CD4-positive, alpha-beta T cell (primary cell): ENCODE measurements at regions of chr1 and their contacts with region 1.

Region 1: DNA sequence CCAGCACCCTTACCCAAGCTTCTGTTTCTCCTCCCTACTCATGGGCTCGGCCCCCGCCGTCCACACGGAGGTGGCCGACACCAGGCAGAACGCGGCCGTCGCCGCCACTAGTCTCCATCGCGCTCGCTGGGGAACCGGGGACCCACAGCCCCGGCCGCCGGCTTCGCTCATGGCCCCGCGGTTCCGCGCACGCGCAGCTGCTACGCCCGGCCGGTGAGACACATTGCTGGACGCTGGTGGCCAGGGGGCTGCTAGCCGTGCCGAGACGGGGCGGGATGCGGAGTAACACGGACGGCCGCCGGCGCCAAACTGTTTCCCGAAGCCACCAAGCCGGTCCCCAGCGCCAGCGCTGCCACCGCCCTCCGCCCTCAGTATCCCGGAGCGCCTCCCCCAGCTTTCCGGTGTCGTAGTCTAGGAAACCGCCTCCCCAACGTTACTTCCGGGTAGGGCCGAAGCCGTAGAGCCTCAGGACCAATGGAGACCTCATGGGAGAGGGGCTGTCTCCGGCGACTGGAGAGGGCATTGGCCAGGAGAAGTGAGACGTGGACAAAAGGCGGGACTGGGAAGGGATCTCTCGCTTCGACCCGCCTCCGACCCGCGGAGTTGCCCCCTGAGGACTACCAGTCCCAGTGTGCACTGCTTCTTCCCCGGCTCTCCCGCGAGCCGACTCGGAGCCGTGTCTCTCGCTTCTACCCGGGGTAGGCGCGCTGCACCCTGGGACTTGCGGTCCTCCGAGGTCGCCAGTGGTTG is at the start of gene EDEM3:
- DNase-seq: peak; percentile 93 to 100 (median 96)
- ATAC-seq: peak; percentile 91
- H3K4me3 ChIP-seq: peak within 1 kb of the TSS; percentile 96
- H3K4me3 Mint-ChIP-seq: peak within 1 kb of the TSS; percentile 92
- H3K27ac ChIP-seq: peak within 1 kb of the TSS; percentile 90 to 95
- H3K27ac Mint-ChIP-seq: peak within 1 kb of the TSS; percentile 87
- H3K4me1 ChIP-seq: peaks cover 8% of the 10 kb centered on the region
- H3K4me1 Mint-ChIP-seq: peaks cover 52% of the 10 kb centered on the region
- H3K27me3 ChIP-seq: no peaks in the 10 kb centered on the region
- H3K27me3 Mint-ChIP-seq: no peaks in the 10 kb centered on the region
- CTCF ChIP-seq: no peak
- total RNA-seq, gene EDEM3: 19.9 to 20.0 TPM

Region 2: DNA sequence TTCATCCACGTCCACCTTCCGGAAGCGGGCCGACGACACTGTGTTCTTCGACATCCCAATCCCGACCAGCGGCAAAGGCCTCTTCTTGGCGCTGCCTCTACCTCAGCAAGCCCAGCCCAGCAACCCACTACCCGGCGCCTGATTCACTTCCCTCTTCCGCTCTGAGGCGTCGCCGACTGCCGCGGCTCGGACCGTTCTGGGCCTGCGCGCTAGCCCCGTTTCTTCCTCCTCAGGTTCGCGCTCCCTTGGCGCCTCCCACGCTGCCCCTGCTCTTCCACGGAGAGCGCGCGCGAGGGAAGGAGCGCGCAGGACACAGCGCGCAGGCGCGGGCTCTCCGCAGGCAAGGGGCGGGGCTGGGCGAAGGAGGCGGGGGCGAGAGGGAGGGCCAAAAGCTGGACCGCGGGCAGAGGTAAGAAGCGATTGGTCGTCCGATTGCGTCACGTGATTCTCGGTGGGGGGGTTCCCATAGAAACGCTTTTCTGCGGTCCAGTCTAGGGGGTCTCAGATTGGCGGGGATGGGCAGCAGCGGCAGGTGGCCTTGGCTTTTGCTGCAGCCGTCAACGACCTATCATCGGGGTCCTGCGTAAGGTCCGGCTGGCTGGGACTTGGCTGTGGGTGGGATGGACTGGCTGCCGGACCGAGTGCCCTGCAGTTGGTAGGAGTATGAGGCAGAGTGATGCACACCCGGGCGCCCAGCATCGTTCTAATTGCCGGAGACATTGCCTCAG is 1118.9 kb before region 1 on chr1 and contains the start of gene ARPC5:
- CTCF ChIA-PET with region 1: no interaction called
- POLR2A ChIA-PET with region 1: no interaction called
- intact Hi-C with region 1: loop called (anchors 5 to 10 kb)
- DNase-seq: peak; percentile 91 to 99 (median 94)
- ATAC-seq: peak; percentile 88
- H3K4me3 ChIP-seq: peak within 1 kb of the TSS; percentile 93
- H3K4me3 Mint-ChIP-seq: peak within 1 kb of the TSS; percentile 100
- H3K27ac ChIP-seq: peak within 1 kb of the TSS; percentile 61 to 86
- H3K27ac Mint-ChIP-seq: peak within 1 kb of the TSS; percentile 94
- H3K4me1 ChIP-seq: peaks cover 17% of the 10 kb centered on the region
- H3K4me1 Mint-ChIP-seq: peaks cover 51% of the 10 kb centered on the region
- H3K27me3 ChIP-seq: no peaks in the 10 kb centered on the region
- H3K27me3 Mint-ChIP-seq: no peaks in the 10 kb centered on the region
- CTCF ChIP-seq: no peak
- total RNA-seq, gene ARPC5: 21.4 to 23.0 TPM

Region 3: DNA sequence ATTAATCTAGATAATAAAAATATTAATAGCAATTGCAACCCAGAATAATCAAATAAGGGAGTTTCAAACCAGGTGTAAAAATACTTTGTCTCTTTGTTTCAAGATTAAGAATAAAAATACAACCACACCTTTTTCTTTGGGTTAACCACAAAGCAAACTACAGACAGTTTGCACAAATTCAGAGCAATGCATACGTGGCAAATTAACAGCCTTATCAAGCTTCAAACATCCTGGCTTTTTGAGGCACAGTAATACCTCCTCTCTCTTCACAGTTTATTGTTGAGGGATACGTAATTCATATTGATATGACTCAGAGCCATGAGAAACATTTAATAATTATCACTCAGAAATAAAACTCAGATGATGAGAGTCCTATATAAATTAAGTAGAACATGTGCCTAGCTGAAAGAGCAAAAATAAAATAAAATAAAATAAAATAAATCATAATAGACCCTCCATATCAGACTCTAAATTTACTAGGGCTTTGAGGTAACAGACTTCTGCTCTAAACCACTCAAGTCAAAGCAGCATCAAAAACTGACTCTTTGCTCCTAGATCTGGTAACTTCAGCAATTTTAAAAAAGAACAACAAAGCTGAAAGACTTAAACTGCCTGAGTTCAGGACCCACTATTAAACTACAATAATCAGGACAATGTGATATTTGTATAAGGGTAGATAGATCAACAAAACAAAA is 11.4 kb before region 1 on chr1:
- CTCF ChIA-PET with region 1: interaction called, 16 read pairs
- POLR2A ChIA-PET with region 1: interaction called, 60 read pairs
- intact Hi-C with region 1: loop called in 1 of 2 experiments (anchors 1 kb)
- DNase-seq: peak in 5 of 14 experiments; percentile 29 to 87 (median 80)
- ATAC-seq: peak; percentile 92
- H3K4me3 ChIP-seq: no peak overlapping the region
- H3K4me3 Mint-ChIP-seq: peak overlapping the region; percentile 49
- H3K27ac ChIP-seq: peak overlapping the region; percentile 55 to 65
- H3K27ac Mint-ChIP-seq: peak overlapping the region; percentile 90
- H3K4me1 ChIP-seq: peaks cover 10% of the 10 kb centered on the region
- H3K4me1 Mint-ChIP-seq: peaks cover 79% of the 10 kb centered on the region
- H3K27me3 ChIP-seq: no peaks in the 10 kb centered on the region
- H3K27me3 Mint-ChIP-seq: no peaks in the 10 kb centered on the region
- CTCF ChIP-seq: no peak

Region 4: DNA sequence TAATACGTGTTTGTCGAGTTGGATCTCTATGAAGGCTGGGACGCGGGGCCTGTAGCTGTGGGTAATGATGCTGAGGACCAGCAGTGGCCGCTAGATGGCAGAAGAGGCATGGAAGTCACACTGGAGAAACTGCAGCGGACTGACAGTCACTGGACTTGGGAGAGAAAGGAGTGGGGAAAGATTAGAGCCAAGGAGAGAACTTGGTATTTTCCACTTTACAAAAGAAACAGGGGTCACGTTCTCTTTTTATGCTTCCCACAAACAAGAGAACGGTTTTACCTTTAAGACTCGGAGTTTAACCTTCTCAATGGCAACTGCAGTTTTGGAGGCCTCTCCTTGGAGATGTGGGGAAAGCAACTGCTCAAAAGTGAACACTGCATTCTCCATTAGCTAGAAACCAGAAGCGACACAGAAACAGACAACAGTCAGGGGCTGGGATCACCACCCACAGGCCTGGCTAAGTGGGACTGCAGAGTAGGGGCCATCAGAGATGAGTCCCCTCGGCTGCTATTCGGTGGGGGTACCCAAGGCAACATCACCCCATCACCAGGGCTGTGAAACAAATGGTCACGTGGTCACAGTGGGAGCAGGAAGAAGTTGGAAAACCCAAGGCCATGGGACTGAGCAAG is 51.1 kb after region 1 on chr1:
- CTCF ChIA-PET with region 1: no interaction called
- POLR2A ChIA-PET with region 1: no interaction called
- intact Hi-C with region 1: no loop called
- DNase-seq: peak; percentile 69 to 91 (median 79)
- ATAC-seq: peak; percentile 96
- H3K4me3 ChIP-seq: no peak overlapping the region
- H3K4me3 Mint-ChIP-seq: no peak overlapping the region
- H3K27ac ChIP-seq: no peak overlapping the region
- H3K27ac Mint-ChIP-seq: no peak overlapping the region
- H3K4me1 ChIP-seq: peaks cover 3% of the 10 kb centered on the region
- H3K4me1 Mint-ChIP-seq: no peaks in the 10 kb centered on the region
- H3K27me3 ChIP-seq: no peaks in the 10 kb centered on the region
- H3K27me3 Mint-ChIP-seq: no peaks in the 10 kb centered on the region
- CTCF ChIP-seq: peak; percentile 96

Region 5: DNA sequence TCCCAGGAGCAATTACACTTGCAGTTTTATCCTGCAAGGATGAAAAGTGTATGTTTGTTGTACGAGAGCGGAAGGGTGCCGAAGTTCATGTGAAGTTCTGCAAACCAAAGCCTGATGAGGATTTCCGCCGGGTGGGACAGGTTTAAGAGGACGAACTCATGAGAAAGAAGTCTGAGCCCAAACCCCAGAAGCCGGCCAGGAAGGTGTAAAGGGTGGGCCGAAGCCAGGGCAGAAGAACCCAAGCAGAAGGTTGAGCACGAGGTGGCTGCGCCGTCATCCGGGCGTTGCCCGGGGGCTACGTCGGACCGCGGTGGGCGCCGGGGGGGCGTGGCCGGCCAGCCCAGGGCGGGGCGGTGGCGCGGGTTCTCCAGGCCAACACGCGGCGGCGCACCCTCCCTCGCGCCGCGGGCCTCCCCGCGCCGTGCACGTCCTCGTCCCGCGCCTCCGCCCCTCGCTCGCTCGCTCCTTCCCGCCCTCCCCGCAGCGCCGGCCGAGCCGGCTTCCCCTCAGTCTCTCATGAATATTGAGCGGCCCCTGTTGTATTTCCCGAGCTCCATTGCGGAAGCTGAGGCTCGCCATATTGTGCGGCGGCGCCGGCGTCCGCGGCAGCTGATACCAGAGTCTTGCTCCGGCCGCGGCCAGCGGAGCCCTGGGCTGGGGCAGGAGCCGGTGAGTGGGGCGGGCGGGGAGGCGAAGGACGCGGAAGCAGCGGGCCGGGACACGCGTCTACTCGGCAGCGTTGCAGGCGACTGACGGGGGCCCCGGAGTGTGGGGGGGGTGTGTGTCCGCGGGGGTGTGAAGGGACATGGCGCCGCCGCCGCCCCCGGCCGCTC is 290.5 kb after region 1 on chr1 and contains the start of gene RNF2:
- CTCF ChIA-PET with region 1: no interaction called
- POLR2A ChIA-PET with region 1: interaction called, 10 read pairs
- intact Hi-C with region 1: loop called (anchors 5 kb)
- DNase-seq: peak; percentile 62 to 94 (median 76)
- ATAC-seq: peak; percentile 90
- H3K4me3 ChIP-seq: peak within 1 kb of the TSS; percentile 80
- H3K4me3 Mint-ChIP-seq: peak within 1 kb of the TSS; percentile 94
- H3K27ac ChIP-seq: peak within 1 kb of the TSS; percentile 70 to 72
- H3K27ac Mint-ChIP-seq: peak within 1 kb of the TSS; percentile 77
- H3K4me1 ChIP-seq: peaks cover 13% of the 10 kb centered on the region
- H3K4me1 Mint-ChIP-seq: peaks cover 59% of the 10 kb centered on the region
- H3K27me3 ChIP-seq: no peaks in the 10 kb centered on the region
- H3K27me3 Mint-ChIP-seq: no peaks in the 10 kb centered on the region
- CTCF ChIP-seq: peak; percentile 15
- total RNA-seq, gene RNF2: 7.4 to 9.0 TPM

Region 6: DNA sequence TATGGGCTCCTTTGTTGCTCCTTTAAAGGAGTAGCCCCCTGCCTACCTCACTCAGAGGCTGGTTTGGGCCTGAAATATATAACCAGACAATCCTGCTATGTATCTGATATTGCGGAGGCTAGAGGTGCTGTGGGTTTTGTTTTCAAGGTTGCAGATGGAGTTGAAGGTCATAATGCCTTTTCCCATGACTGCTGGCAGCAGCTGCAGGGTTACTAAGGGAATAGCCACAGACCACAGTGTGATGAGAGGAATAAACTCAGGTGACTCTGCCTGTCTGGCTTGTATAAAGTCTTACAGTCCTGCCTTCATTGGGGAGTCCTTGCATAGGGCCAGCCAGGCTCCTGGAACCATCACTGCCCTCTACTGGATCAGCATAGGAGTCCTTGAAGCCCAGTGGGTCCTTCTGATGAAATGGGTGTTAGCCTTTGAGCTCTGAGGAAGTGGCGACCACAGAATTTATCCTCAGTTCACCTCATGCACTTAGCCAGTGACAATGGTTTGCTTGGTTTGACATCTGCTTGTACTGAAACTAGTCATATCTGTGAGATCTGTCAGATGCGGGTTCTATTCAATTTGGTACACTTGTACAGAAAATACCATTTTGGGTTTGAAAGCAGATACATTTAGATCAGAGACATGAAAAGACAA is 805.2 kb after region 1 on chr1:
- CTCF ChIA-PET with region 1: no interaction called
- POLR2A ChIA-PET with region 1: no interaction called
- intact Hi-C with region 1: loop called in 1 of 2 experiments (anchors 10 kb)
- DNase-seq: peak in 10 of 14 experiments; percentile 17 to 84 (median 41)
- ATAC-seq: peak; percentile 69
- H3K4me3 ChIP-seq: no peak overlapping the region
- H3K4me3 Mint-ChIP-seq: peak overlapping the region; percentile 63
- H3K27ac ChIP-seq: peak overlapping the region in 1 of 2 donors; percentile 12
- H3K27ac Mint-ChIP-seq: peak overlapping the region; percentile 63
- H3K4me1 ChIP-seq: peaks cover 33% of the 10 kb centered on the region
- H3K4me1 Mint-ChIP-seq: peaks cover 54% of the 10 kb centered on the region
- H3K27me3 ChIP-seq: no peaks in the 10 kb centered on the region
- H3K27me3 Mint-ChIP-seq: no peaks in the 10 kb centered on the region
- CTCF ChIP-seq: no peak

Region 7: GRCh38 chr1:186375088-186375953 is 1620.7 kb after region 1 on chr1 and contains the starts of genes ODR4 and TPR:
- CTCF ChIA-PET with region 1: interaction called, 4 read pairs
- POLR2A ChIA-PET with region 1: interaction called, 8 read pairs
- intact Hi-C with region 1: loop called (anchors 5 to 10 kb)
- DNase-seq: peak; percentile 89 to 99 (median 94)
- ATAC-seq: peak; percentile 87
- H3K4me3 ChIP-seq: peak within 1 kb of the TSS; percentile 79
- H3K4me3 Mint-ChIP-seq: peak within 1 kb of the TSS; percentile 92
- H3K27ac ChIP-seq: peak within 1 kb of the TSS; percentile 89 to 96
- H3K27ac Mint-ChIP-seq: peak within 1 kb of the TSS; percentile 93
- H3K4me1 ChIP-seq: peaks cover 16% of the 10 kb centered on the region
- H3K4me1 Mint-ChIP-seq: peaks cover 77% of the 10 kb centered on the region
- H3K27me3 ChIP-seq: no peaks in the 10 kb centered on the region
- H3K27me3 Mint-ChIP-seq: no peaks in the 10 kb centered on the region
- CTCF ChIP-seq: peak; percentile 85
- total RNA-seq, gene ODR4: 21.3 to 24.5 TPM
- total RNA-seq, gene TPR: 82.3 to 91.3 TPM